Gastrocnemius medialis (tissue), 4 donors: ENCODE measurements at regions of chr14 and their contacts with region 1.

Region 1: DNA sequence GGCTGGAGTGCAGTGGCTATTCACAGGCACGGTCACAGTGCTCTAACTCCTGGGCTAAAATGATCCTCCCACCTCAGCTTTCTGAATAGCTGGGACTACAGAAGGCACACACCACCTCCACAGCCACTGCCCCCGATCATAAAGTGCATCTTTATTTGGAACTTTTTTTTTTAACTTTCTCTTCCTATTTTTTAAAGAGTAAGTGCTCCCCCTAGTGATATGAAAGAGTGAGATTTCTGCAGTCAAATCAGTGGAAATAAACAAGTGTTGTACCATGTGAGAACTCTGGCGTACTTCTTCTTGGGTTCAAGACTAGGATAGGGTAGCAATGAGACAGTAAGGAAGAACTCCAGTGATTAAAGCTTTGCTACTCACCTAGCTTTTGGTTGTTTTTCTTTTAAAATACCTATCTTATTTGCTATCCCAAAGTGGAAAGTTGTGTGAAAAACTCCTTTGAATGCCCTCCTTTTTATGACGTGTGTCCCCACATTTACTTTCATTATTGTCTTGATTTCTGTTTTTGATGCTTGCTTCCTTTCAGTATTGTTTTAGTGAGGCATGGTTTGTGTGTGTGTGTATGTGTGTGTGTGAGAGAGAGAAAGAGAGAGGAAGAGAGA is 6.6 kb downstream of the PPP4R4 start:
- DNase-seq: no peak
- ATAC-seq: peak; percentile 21 to 74
- H3K4me3 ChIP-seq: no peak overlapping the region
- H3K27ac ChIP-seq: no peak overlapping the region
- H3K4me1 ChIP-seq: no peaks in the 10 kb centered on the region
- H3K27me3 ChIP-seq: peaks cover 16 to 32% (median 23%) of the 10 kb centered on the region in 3 donors
- CTCF ChIP-seq: peak in 4 of 5 experiments; percentile 18 to 57 (median 41)
- POLR2A ChIP-seq: no peak

Region 2: GRCh38 chr14:93788543-93789227 is 392.1 kb before region 1 on chr14:
- in situ Hi-C with region 1: no loop called
- intact Hi-C with region 1: no loop called
- DNase-seq: no peak
- ATAC-seq: peak; percentile 85 to 87
- H3K4me3 ChIP-seq: peak overlapping the region; percentile 51 to 57 (median 56)
- H3K27ac ChIP-seq: no peak overlapping the region
- H3K4me1 ChIP-seq: no peaks in the 10 kb centered on the region
- H3K27me3 ChIP-seq: no peaks in the 10 kb centered on the region
- CTCF ChIP-seq: peak in 3 of 5 experiments; percentile 17 to 54 (median 28)
- POLR2A ChIP-seq: no peak

Region 3: GRCh38 chr14:94036313-94037050 is 144.3 kb before region 1 on chr14:
- in situ Hi-C with region 1: no loop called
- intact Hi-C with region 1: loop called (anchors 1 kb)
- DNase-seq: peak; percentile 32 to 64
- ATAC-seq: peak; percentile 82 to 95
- H3K4me3 ChIP-seq: no peak overlapping the region
- H3K27ac ChIP-seq: no peak overlapping the region
- H3K4me1 ChIP-seq: no peaks in the 10 kb centered on the region
- H3K27me3 ChIP-seq: no peaks in the 10 kb centered on the region
- CTCF ChIP-seq: peak; percentile 62 to 87 (median 84)
- POLR2A ChIP-seq: no peak

Region 4: GRCh38 chr14:94088516-94088915 is 92.2 kb before region 1 on chr14:
- in situ Hi-C with region 1: no loop called
- intact Hi-C with region 1: no loop called
- DNase-seq: no peak
- ATAC-seq: no peak
- H3K4me3 ChIP-seq: no peak overlapping the region
- H3K27ac ChIP-seq: no peak overlapping the region
- H3K4me1 ChIP-seq: no peaks in the 10 kb centered on the region
- H3K27me3 ChIP-seq: no peaks in the 10 kb centered on the region
- CTCF ChIP-seq: no peak
- POLR2A ChIP-seq: no peak

Region 5: DNA sequence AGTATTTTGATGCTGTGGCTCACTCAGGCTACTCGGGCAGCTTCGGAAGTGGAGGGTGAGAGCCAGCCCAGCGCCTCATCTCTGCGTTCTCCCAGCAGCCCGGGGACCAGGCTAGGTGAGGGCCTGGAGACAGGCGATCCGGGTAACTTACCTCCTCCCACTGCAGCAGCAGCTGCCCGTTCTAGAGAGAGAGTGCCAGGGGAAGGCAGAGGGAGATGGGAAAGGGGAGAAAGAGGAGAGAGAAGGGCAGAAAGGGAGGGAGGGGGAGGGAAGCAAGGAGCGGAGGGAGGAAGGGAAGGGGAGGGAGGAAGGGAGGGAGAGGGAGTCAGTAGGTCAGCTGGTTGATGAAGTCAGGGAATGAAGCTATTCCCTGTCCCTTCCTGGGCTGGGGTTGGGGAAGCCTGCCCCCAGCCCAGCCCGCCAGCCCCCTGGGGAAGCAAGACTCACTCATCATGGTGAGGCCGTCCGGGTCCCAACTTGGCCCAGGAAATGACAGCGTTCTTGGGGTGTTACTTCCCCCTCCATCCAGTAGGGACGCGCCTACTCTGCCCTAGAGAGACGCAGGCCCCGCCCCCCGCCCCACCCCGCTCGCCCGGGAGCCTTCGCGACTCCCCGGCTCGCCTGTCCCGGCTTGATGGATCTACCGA is 51.5 kb before region 1 on chr14 and contains the start of gene IFI27L2:
- in situ Hi-C with region 1: no loop called
- intact Hi-C with region 1: loop called (anchors 1 kb)
- DNase-seq: peak; percentile 54 to 56
- ATAC-seq: peak; percentile 66 to 90
- H3K4me3 ChIP-seq: peak within 1 kb of the TSS; percentile 50 to 60 (median 54)
- H3K27ac ChIP-seq: peak within 1 kb of the TSS; percentile 53 to 76 (median 68)
- H3K4me1 ChIP-seq: peaks cover 8 to 11% of the 10 kb centered on the region in 2 donors
- H3K27me3 ChIP-seq: no peaks in the 10 kb centered on the region
- CTCF ChIP-seq: peak in 3 of 5 experiments; percentile 10 to 45 (median 26)
- POLR2A ChIP-seq: peak; percentile 14 to 25
- total RNA-seq, gene IFI27L2: 1.1 to 9.1 (median 3.3) TPM

Region 6: GRCh38 chr14:94136575-94137331 is 44.0 kb before region 1 on chr14:
- in situ Hi-C with region 1: no loop called
- intact Hi-C with region 1: loop called (anchors 1 kb)
- DNase-seq: peak; percentile 61 to 79
- ATAC-seq: peak; percentile 90 to 94
- H3K4me3 ChIP-seq: no peak overlapping the region
- H3K27ac ChIP-seq: no peak overlapping the region
- H3K4me1 ChIP-seq: peaks cover 0 to 3% of the 10 kb centered on the region in 2 donors
- H3K27me3 ChIP-seq: no peaks in the 10 kb centered on the region
- CTCF ChIP-seq: peak; percentile 88 to 99 (median 91)
- POLR2A ChIP-seq: no peak